K562 (cell line): ENCODE measurements at regions of chr1 and their contacts with region 1.

Region 1: GRCh38 chr1:241736387-241736786 is 84.3 kb downstream of the WDR64 start:
- DNase-seq: peak in 3 of 4 experiments; percentile 29 to 46 (median 30)
- ATAC-seq: peak; percentile 83
- H3K4me3 ChIP-seq: no peak overlapping the region
- H3K27ac ChIP-seq: no peak overlapping the region
- H3K4me1 ChIP-seq: peaks cover 11 to 22% of the 10 kb centered on the region in 2 experiments; a peak in 4 of 5 replicates
- H3K27me3 ChIP-seq: no peaks in the 10 kb centered on the region
- CTCF ChIP-seq: peak in 2 of 3 experiments; percentile 9 to 20; a peak in 1 of 6 replicates
- EP300 ChIP-seq: no peak
- POLR2A ChIP-seq: no peak
- RAD21 ChIP-seq: no peak

Region 2: GRCh38 chr1:241756582-241756981 is 20.2 kb after region 1 on chr1:
- CTCF ChIA-PET with region 1: no interaction called
- POLR2A ChIA-PET with region 1: no interaction called
- in situ Hi-C with region 1: no loop called
- intact Hi-C with region 1: loop called (anchors 1 kb)
- DNase-seq: no peak
- ATAC-seq: no peak
- H3K4me3 ChIP-seq: no peak overlapping the region
- H3K27ac ChIP-seq: no peak overlapping the region
- H3K4me1 ChIP-seq: no peaks in the 10 kb centered on the region
- H3K27me3 ChIP-seq: no peaks in the 10 kb centered on the region
- CTCF ChIP-seq: no peak
- EP300 ChIP-seq: no peak
- POLR2A ChIP-seq: no peak
- RAD21 ChIP-seq: no peak